Activated CD4-positive, alpha-beta memory T cell treated with anti-CD3 and anti-CD28 coated beads, Interleukin-2, amount 10 ng/mL, durations not matched to agents 7 days and 5 days (primary cell): ENCODE measurements at regions of chr15 and their contacts with region 1.

Region 1: DNA sequence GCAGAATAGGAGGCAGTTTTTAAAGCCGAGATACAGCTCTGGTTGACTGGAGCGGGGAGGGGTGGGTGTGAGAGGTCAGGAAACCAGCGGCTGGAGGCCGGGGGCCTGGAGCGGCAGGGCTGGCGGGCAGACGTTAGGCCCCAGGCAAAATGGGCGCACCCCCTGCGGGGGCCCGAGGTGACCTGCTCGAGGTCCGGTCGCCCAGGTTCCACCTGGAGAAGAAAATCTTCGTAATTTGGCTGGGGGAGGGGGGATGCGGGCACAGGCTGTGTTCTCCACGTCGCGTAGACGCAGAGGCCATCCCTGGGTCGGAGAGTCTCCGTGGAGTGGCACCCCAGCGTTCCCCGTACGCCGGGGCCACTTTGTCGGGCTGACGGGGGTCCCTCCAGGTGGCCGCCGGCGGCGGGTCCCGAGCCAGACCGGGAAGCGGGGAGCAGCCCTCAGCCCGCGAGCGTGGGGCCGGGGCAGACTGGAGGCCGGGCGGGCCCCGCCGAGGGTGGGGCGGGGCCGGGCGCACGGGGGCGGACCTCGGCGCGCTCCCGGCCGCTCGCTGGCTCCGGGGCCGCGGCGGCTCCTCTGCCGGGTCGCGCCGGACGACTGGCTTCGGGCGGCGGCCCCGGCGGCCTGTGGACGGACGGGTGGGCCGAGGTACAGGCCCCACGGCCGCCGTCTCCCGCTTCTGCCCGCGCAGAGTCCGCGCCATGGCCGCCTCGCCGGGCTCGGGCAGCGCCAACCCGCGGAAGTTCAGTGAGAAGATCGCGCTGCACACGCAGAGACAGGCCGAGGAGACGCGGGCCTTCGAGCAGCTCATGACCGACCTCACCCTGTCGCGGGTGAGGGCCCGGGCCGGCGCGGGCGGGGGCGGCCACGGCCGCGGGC is at the start of gene CRTC3:
- DNase-seq: peak; percentile 64
- H3K4me3 Mint-ChIP-seq: peak within 1 kb of the TSS; percentile 94
- H3K27ac Mint-ChIP-seq: peak within 1 kb of the TSS; percentile 79
- H3K4me1 Mint-ChIP-seq: peaks cover 51% of the 10 kb centered on the region
- H3K27me3 Mint-ChIP-seq: no peaks in the 10 kb centered on the region
- total RNA-seq, gene CRTC3: 86.0 to 89.3 TPM

Region 2: GRCh38 chr15:90419738-90420406 is 109.7 kb before region 1 on chr15:
- CTCF ChIA-PET with region 1: no interaction called
- POLR2A ChIA-PET with region 1: no interaction called
- DNase-seq: peak; percentile 35
- H3K4me3 Mint-ChIP-seq: peak overlapping the region; percentile 26
- H3K27ac Mint-ChIP-seq: peak overlapping the region; percentile 82
- H3K4me1 Mint-ChIP-seq: peaks cover 64% of the 10 kb centered on the region
- H3K27me3 Mint-ChIP-seq: no peaks in the 10 kb centered on the region

Region 3: DNA sequence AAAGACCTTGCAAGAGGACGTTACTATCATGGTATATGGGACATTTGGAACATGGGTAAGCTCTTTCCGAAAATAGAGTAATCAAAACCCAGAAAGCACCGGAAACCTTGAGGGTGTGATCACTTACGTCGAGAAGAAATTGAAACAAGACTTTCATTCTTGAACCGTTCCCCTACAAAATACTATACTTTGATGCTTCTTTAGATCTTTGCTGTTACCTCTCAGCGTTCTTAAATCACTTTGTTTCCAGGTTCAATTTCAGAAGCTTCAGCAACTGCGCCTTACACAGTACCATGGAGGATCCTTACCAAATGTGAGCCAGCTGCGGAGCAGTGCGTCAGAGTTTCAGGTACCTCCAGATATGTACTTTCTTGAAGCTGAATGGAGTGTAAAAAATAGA is 10.2 kb after region 1 on chr15:
- CTCF ChIA-PET with region 1: interaction called, 10 read pairs
- POLR2A ChIA-PET with region 1: interaction called, 53 read pairs
- DNase-seq: no peak
- H3K4me3 Mint-ChIP-seq: peak overlapping the region; percentile 84
- H3K27ac Mint-ChIP-seq: peak overlapping the region; percentile 95
- H3K4me1 Mint-ChIP-seq: peaks cover 69% of the 10 kb centered on the region
- H3K27me3 Mint-ChIP-seq: no peaks in the 10 kb centered on the region

Region 4: DNA sequence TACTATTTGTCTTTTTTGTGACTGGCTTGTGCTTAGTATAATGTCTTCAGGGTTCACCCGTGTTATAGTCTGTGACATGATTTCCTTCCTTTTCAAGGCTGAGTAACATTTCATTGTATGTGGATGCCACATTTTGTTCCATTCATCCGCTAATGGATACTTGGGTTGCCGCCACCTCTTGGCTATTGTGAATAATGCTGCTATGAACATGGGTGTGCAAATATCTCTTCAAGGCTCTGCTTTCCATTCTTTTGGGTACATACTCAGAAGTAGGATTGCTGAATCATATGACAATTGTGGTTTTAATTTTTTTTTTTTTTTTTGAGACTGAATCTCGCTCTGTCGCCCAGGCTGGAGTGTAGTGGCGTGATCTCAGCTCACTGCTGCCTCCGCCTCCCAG is 15.5 kb after region 1 on chr15:
- CTCF ChIA-PET with region 1: interaction called, 10 read pairs
- POLR2A ChIA-PET with region 1: interaction called, 53 read pairs
- DNase-seq: no peak
- H3K4me3 Mint-ChIP-seq: no peak overlapping the region
- H3K27ac Mint-ChIP-seq: no peak overlapping the region
- H3K4me1 Mint-ChIP-seq: peaks cover 53% of the 10 kb centered on the region
- H3K27me3 Mint-ChIP-seq: no peaks in the 10 kb centered on the region

Region 5: DNA sequence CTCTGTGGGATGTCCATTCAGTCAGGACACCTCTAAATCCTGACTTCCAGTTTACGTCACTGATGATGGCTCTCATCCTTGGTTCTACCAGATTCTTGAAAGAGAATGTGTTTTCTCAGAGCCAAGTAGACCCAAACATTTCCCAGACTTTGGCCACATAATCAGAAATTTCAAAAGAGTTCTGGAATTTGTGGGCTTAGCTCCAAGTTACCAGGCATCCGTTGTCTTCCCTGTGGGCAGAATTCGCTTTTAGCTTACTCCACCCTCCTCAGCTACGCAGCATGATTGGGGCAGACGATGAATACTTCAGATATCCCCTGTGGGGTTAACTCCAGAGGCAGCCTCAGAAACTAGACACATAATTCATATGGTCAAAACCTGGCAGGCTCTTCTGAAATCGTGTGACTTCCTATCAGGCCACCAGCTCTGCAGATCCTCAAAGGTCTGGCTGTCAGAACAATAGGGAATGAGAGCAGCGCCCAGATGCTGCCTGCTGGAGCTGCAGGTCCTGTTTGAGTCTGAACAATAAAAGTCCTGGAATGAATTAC is 30.7 kb after region 1 on chr15:
- CTCF ChIA-PET with region 1: interaction called, 3 read pairs
- POLR2A ChIA-PET with region 1: interaction called, 22 read pairs
- DNase-seq: no peak
- H3K4me3 Mint-ChIP-seq: no peak overlapping the region
- H3K27ac Mint-ChIP-seq: peak overlapping the region; percentile 42
- H3K4me1 Mint-ChIP-seq: peaks cover 80% of the 10 kb centered on the region
- H3K27me3 Mint-ChIP-seq: no peaks in the 10 kb centered on the region

Region 6: DNA sequence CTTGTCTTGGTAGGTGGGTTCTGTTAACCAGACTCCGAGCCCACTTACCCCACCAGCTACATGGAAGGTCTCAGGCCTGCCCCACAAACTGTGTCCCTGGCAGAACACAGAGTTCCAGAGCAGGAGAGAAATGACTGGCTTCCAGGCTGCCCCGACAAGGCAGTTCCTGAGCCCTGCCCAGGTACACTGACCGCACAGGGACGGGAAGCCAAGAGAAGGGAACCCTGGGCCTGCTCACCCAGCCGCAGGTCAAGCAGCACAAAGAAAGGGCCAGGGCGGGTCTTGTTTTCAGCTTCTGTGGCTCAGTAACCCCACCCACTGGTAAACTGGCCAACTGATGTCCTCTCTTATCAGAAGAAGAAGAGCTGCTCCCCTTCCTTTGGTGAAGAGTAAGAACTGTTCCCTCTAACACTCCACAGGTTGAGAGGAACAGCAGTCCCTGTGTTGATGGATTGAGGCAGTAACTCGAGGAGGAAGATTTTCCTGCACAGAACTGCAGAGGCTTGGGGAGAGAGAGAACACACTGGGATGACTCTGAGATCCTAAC is 68.5 kb after region 1 on chr15:
- CTCF ChIA-PET with region 1: interaction called, 8 read pairs
- POLR2A ChIA-PET with region 1: interaction called, 25 read pairs
- DNase-seq: peak; percentile 47
- H3K4me3 Mint-ChIP-seq: peak overlapping the region; percentile 60
- H3K27ac Mint-ChIP-seq: peak overlapping the region; percentile 100
- H3K4me1 Mint-ChIP-seq: peaks cover 81% of the 10 kb centered on the region
- H3K27me3 Mint-ChIP-seq: no peaks in the 10 kb centered on the region

Region 7: GRCh38 chr15:90620379-90621067 is 90.9 kb after region 1 on chr15:
- CTCF ChIA-PET with region 1: interaction called, 6 read pairs
- POLR2A ChIA-PET with region 1: interaction called, 13 read pairs
- DNase-seq: peak; percentile 52
- H3K4me3 Mint-ChIP-seq: peak overlapping the region; percentile 31
- H3K27ac Mint-ChIP-seq: peak overlapping the region; percentile 84
- H3K4me1 Mint-ChIP-seq: peaks cover 35% of the 10 kb centered on the region
- H3K27me3 Mint-ChIP-seq: no peaks in the 10 kb centered on the region